ENCODE measurements at regions of chr4 and their contacts with region 1.

Region 1: DNA sequence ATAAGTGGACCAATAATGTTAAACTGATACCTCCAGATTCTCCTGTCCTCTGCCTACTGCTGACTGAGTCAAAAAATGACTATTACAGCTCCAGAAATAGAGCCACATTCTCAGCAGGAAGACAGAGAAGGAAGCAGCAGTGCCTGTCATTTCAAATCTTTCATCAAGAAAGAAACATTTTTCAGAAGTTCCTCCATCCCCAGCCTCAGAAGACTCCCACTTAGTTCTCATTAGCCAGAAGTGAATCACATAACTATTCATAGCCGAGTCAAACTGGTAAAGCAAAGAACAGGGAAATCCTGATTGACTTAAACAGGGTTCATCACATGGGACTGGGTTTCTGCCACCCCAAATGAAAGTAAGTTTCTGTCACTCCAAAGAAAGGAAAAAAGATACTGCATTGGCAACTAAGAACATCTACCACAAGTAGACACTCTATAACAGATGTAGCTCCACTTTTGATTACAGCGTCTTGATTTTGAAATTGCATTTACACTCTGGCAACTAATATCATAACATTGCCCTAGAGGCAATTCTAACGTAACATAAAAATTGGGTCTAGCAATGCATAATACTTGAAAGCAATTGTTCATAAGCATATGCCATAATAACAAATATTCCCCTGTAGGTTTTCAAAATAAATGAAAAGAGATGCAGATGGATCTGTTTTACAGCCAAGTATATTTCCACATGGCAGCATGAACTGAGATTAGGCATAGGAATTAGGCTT is 599.8 kb downstream of the GALNTL6 start:
- DNase-seq: no peak
- H3K4me3 ChIP-seq: no peak overlapping the region
- H3K27ac ChIP-seq: no peak overlapping the region
- H3K4me1 ChIP-seq: no peaks in the 10 kb centered on the region
- H3K27me3 ChIP-seq: no peaks in the 10 kb centered on the region
- CTCF ChIP-seq: no peak
- POLR2A ChIP-seq: no peak

Region 2: DNA sequence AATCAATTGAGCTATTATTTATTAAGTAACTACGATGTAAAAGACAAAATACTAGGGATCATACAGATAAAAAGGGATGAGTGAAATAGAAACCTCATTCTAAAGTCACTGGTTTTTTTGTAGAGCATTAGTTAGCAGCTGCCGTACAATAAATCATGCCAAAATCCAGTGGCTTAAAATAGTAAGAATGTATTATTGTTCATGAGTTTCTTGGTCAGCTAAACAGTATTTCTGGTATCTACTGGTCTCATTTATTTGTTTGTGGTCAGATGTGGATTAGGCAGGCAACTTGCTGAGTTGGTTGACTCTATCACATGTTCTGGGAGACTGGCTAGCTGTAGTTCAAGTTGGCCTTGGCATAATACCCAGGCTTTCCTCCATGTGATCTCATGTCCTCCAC is 67.5 kb after region 1 on chr4:
- intact Hi-C with region 1: loop called (anchors 2 kb)
- DNase-seq: no peak
- H3K4me3 ChIP-seq: no peak overlapping the region
- H3K27ac ChIP-seq: no peak overlapping the region
- H3K4me1 ChIP-seq: no peaks in the 10 kb centered on the region
- H3K27me3 ChIP-seq: no peaks in the 10 kb centered on the region
- CTCF ChIP-seq: no peak
- POLR2A ChIP-seq: no peak

Measured in vagina (tissue), 2 donors.